Activated CD4-positive, alpha-beta memory T cell treated with anti-CD3 and anti-CD28 coated beads, Interleukin-2, amount 10 ng/mL, durations not matched to agents 7 days and 5 days (primary cell): ENCODE measurements at regions of chr17 and their contacts with region 1.

Region 1: DNA sequence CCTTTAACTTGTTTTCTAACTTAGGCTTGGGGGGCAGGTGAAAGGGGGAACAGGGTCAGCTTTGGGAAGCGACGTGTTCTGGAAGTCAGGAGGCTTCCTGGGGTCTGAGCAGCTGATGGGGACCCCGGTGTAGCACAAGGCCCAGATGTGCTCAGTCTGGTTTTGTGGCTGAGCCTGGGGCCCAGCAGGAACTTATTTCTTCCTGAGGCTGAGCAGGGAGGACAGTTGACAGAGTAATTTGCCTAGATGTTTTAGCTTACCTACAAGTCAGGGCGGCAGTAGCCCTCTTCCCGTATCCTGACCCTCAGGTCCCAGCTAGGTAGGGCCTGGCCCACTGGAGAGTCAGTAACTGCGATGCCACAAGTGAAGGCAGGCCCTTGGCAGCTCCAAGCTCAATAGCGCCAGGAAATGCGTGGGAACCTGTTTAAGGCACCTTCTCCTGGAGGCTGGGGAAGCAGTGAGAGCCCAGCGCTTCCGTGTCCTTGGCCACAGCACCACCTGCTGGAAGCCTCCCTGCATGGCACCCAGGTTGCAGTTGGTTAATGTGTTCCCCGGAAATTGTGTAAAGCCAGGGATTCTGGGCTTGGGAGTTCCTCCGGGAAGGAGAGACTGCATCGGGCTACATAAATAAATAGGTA is 5.2 kb downstream of the CCR7 start:
- DNase-seq: peak; percentile 86
- H3K4me3 Mint-ChIP-seq: peak overlapping the region; percentile 74
- H3K27ac Mint-ChIP-seq: peak overlapping the region; percentile 91
- H3K4me1 Mint-ChIP-seq: peaks cover 77% of the 10 kb centered on the region
- H3K27me3 Mint-ChIP-seq: peaks cover 37% of the 10 kb centered on the region

Region 2: DNA sequence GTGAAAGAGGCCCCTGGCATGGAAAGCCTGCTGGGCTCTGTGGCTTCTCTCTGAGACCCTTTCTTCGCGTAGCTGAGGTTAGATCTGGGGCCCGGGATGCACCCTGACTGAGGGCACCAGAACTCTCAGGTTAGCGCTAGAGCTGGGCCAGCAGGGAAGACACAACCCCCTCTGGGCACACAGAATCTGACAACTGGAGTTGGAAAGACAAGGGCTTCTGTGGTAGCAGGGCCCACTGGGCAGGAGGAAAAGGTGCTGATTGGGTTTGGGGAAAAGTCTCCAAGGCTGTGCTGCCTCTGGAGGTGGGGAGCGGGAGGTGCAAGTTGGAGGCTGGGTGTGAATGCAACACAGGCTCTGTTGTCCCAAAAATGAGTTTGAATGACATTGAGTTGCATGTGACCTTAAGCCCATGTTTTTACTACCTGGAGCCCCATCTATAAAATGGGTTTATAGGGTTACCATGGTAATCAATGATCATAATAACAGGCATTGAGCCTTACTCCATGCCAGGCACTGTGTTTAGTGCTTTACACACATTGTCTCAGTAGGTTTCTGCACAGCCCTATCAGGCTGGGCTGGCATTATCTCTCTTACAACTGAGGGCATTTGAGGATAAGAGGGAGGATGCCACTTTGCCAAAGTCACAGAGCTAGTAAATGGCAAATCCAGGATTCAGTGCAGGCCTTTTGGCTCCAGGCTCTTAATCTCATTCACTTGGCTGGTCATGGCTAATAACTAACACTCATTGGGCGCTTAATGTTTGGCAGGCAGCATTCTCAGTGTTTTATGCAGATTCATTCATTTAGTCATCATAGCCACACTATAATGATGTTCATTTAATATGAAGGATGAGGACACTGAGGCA is 126.3 kb before region 1 on chr17:
- CTCF ChIA-PET with region 1: interaction called, 12 read pairs
- POLR2A ChIA-PET with region 1: no interaction called
- DNase-seq: peak; percentile 44
- H3K4me3 Mint-ChIP-seq: no peak overlapping the region
- H3K27ac Mint-ChIP-seq: no peak overlapping the region
- H3K4me1 Mint-ChIP-seq: peaks cover 14% of the 10 kb centered on the region
- H3K27me3 Mint-ChIP-seq: peaks cover 31% of the 10 kb centered on the region

Region 3: GRCh38 chr17:40480501-40481003 is 79.5 kb before region 1 on chr17:
- CTCF ChIA-PET with region 1: interaction called, 9 read pairs
- POLR2A ChIA-PET with region 1: interaction called, 12 read pairs
- DNase-seq: peak; percentile 91
- H3K4me3 Mint-ChIP-seq: peak overlapping the region; percentile 55
- H3K27ac Mint-ChIP-seq: peak overlapping the region; percentile 89
- H3K4me1 Mint-ChIP-seq: peaks cover 90% of the 10 kb centered on the region
- H3K27me3 Mint-ChIP-seq: peaks cover 5% of the 10 kb centered on the region

Region 4: GRCh38 chr17:40542558-40543411 is 17.3 kb before region 1 on chr17:
- CTCF ChIA-PET with region 1: interaction called, 266 read pairs
- POLR2A ChIA-PET with region 1: interaction called, 81 read pairs
- DNase-seq: no peak
- H3K4me3 Mint-ChIP-seq: no peak overlapping the region
- H3K27ac Mint-ChIP-seq: no peak overlapping the region
- H3K4me1 Mint-ChIP-seq: peaks cover 60% of the 10 kb centered on the region
- H3K27me3 Mint-ChIP-seq: peaks cover 41% of the 10 kb centered on the region

Region 5: DNA sequence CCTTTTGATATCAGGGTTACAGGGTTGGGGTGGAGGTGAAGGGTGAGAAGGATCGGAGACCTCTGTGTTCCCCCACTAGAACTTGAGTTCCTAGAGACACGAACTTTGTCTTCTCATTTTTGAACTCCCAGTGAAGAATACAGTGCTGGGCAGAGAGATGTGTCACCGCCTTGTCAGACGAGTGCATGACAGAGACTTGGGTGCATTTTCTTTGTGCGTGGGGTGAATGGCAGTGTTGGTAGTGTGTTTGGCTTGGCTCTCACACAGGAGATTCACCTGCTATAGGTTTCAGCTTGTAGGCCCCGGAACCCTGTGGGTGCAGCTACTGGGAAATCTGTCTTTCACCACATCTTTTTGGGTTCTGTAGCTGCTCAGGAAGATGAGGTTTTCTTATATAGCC is 45.2 kb after region 1 on chr17:
- CTCF ChIA-PET with region 1: interaction called, 15 read pairs
- POLR2A ChIA-PET with region 1: interaction called, 130 read pairs
- DNase-seq: peak; percentile 67
- H3K4me3 Mint-ChIP-seq: peak overlapping the region; percentile 5
- H3K27ac Mint-ChIP-seq: peak overlapping the region; percentile 85
- H3K4me1 Mint-ChIP-seq: peaks cover 91% of the 10 kb centered on the region
- H3K27me3 Mint-ChIP-seq: no peaks in the 10 kb centered on the region

Region 6: DNA sequence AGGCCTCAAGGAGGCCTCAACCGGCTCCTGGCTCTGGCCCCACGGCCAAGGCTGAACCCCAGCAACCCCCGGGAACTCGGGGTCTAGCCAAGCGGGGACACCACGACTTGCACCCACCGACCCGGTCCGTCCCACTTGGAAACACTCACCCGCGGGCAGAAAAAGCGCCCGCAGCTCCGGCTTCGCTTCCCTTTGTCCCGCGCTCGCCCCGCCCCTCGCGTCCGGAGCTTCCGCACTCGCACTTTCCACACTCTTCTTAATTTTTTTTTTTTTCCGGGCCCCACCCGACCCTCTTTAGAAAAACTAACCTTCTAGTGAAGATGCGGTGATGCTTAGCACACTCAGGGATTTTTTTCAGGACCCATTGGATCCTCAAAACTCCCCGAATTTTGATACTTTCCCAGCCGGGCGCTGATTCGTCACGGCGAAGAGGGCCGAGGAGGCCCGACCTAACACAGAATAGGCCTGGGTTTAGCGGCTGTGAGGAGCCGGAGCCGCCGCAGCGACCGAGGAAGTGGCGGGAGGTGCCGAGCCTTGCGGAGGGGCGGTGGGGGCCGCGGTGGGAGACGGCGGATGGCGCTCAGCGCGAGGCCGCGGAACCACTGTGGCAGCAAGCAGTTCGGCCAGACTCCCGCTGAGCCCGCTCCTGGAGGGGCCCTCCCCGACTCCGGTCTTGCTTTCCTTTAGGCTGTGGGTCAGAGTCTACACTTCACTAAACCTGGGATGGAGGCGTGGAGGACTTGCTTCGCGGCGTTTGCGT is 87.7 kb after region 1 on chr17 and contains the start of gene SMARCE1:
- CTCF ChIA-PET with region 1: interaction called, 10 read pairs
- POLR2A ChIA-PET with region 1: interaction called, 66 read pairs
- DNase-seq: peak; percentile 73
- H3K4me3 Mint-ChIP-seq: peak within 1 kb of the TSS; percentile 95
- H3K27ac Mint-ChIP-seq: peak within 1 kb of the TSS; percentile 94
- H3K4me1 Mint-ChIP-seq: peaks cover 52% of the 10 kb centered on the region
- H3K27me3 Mint-ChIP-seq: no peaks in the 10 kb centered on the region
- total RNA-seq, gene SMARCE1: 96.7 to 102 TPM

Region 7: DNA sequence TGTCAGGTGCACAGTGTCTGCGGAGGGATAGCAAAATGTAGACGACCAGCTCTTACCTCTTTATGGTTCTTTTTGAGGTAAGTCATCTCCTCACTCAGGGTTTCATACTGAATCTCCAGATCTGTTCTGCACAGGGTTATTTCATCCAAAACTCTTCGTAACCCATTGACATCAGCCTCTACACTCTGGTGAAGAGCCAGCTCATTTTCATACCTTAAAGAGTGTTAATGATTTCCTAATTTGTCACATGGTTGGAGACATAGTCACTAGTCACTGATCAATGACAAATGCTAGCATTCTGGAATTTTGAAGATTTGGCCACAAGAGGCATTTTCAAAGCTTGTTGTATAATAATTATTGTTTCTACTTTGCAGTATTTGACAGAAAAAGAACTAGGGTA is 193.7 kb after region 1 on chr17:
- CTCF ChIA-PET with region 1: no interaction called
- POLR2A ChIA-PET with region 1: no interaction called
- DNase-seq: no peak
- H3K4me3 Mint-ChIP-seq: no peak overlapping the region
- H3K27ac Mint-ChIP-seq: no peak overlapping the region
- H3K4me1 Mint-ChIP-seq: no peaks in the 10 kb centered on the region
- H3K27me3 Mint-ChIP-seq: peaks cover 31% of the 10 kb centered on the region